ENCODE measurements at regions of chr7 and their contacts with region 1.

Region 1: GRCh38 chr7:102978280-102978679 is 65.5 kb downstream of the LRRC17 start:
- DNase-seq: peak; percentile 67
- ATAC-seq: peak; percentile 82
- H3K4me3 ChIP-seq: peak overlapping the region in 1 of 2 experiments; percentile 8; a peak in 1 of 4 replicates
- H3K27ac ChIP-seq: peak overlapping the region; percentile 57
- H3K4me1 ChIP-seq: peaks cover 7 to 14% of the 10 kb centered on the region in 2 experiments
- H3K27me3 ChIP-seq: no peaks in the 10 kb centered on the region
- CTCF ChIP-seq: no peak
- POLR2A ChIP-seq: no peak
- RAD21 ChIP-seq: no peak

Region 2: DNA sequence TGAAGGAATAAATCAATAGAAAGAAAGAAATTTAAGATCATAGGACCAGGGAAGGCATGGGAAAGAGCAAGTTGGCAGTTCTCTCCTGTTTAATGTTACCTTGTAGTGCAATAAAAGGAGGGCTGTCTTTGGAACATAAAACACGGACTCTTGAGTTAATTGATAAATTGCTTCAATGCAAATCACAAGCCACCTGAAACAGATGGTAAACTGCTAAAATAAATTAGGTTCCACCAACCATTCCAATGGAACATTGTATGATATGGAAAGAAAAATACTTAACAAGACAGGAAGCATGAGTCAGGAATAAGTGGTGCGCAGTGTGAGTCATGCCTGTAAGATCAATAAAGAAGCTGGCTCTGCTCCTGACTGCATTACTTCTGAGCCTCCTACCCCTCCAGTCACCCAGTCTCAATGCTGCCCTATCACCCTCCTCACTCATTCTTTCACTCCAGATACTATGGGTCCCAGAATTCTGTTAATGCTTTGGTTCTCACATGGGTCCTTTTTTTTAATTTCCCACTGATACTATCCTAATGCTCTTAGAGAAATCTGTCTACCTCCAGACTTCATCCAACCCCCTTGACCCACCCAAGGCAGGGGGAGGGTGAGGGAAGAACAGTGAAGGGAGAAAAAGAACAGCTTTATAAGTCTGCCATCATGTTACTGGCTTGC is 13.4 kb after region 1 on chr7:
- CTCF ChIA-PET with region 1: no interaction called
- POLR2A ChIA-PET with region 1: no interaction called
- RAD21 ChIA-PET with region 1: no interaction called
- intact Hi-C with region 1: loop called (anchors 1 kb)
- DNase-seq: peak; percentile 96
- ATAC-seq: peak; percentile 86
- H3K4me3 ChIP-seq: peak overlapping the region in 1 of 2 experiments; percentile 28; a peak in 2 of 4 replicates
- H3K27ac ChIP-seq: peak overlapping the region; percentile 94
- H3K4me1 ChIP-seq: peaks cover 40 to 42% of the 10 kb centered on the region in 2 experiments
- H3K27me3 ChIP-seq: no peaks in the 10 kb centered on the region
- CTCF ChIP-seq: no peak
- POLR2A ChIP-seq: no peak
- RAD21 ChIP-seq: peak; percentile 26

Measured in HCT116 (cell line).